Activated B cell treated with CpG ODN at 0.5 μM for 24 hours (primary cell): ENCODE measurements at regions of chr1 and their contacts with region 1.

Region 1: GRCh38 chr1:26284597-26285360 is 4.9 kb downstream of the SH3BGRL3 start:
- DNase-seq: peak; percentile 75
- ATAC-seq: peak; percentile 54
- H3K4me3 Mint-ChIP-seq: peak overlapping the region; percentile 83
- H3K27ac Mint-ChIP-seq: peak overlapping the region; percentile 100
- H3K4me1 Mint-ChIP-seq: peaks cover 93% of the 10 kb centered on the region
- H3K27me3 Mint-ChIP-seq: no peaks in the 10 kb centered on the region
- CTCF ChIP-seq: no peak

Region 2: GRCh38 chr1:24594154-24594553 is 1690.6 kb before region 1 on chr1:
- CTCF ChIA-PET with region 1: no interaction called
- POLR2A ChIA-PET with region 1: no interaction called
- intact Hi-C with region 1: no loop called
- DNase-seq: no peak
- ATAC-seq: no peak
- H3K4me3 Mint-ChIP-seq: no peak overlapping the region
- H3K27ac Mint-ChIP-seq: no peak overlapping the region
- H3K4me1 Mint-ChIP-seq: no peaks in the 10 kb centered on the region
- H3K27me3 Mint-ChIP-seq: peaks cover 13% of the 10 kb centered on the region
- CTCF ChIP-seq: no peak

Region 3: GRCh38 chr1:24714859-24715520 is 1569.8 kb before region 1 on chr1:
- CTCF ChIA-PET with region 1: no interaction called
- POLR2A ChIA-PET with region 1: interaction called, 10 read pairs
- intact Hi-C with region 1: no loop called
- DNase-seq: no peak
- ATAC-seq: no peak
- H3K4me3 Mint-ChIP-seq: no peak overlapping the region
- H3K27ac Mint-ChIP-seq: no peak overlapping the region
- H3K4me1 Mint-ChIP-seq: no peaks in the 10 kb centered on the region
- H3K27me3 Mint-ChIP-seq: no peaks in the 10 kb centered on the region
- CTCF ChIP-seq: no peak

Region 4: GRCh38 chr1:25952841-25953401 is 331.9 kb before region 1 on chr1:
- CTCF ChIA-PET with region 1: no interaction called
- POLR2A ChIA-PET with region 1: no interaction called
- intact Hi-C with region 1: no loop called
- DNase-seq: no peak
- ATAC-seq: no peak
- H3K4me3 Mint-ChIP-seq: no peak overlapping the region
- H3K27ac Mint-ChIP-seq: no peak overlapping the region
- H3K4me1 Mint-ChIP-seq: no peaks in the 10 kb centered on the region
- H3K27me3 Mint-ChIP-seq: no peaks in the 10 kb centered on the region
- CTCF ChIP-seq: no peak

Region 5: GRCh38 chr1:26233903-26234643 is 50.7 kb before region 1 on chr1 and contains the start of gene CEP85:
- CTCF ChIA-PET with region 1: interaction called, 5 read pairs
- POLR2A ChIA-PET with region 1: interaction called, 22 read pairs
- intact Hi-C with region 1: loop called (anchors 2 kb)
- DNase-seq: peak; percentile 94
- ATAC-seq: peak; percentile 88
- H3K4me3 Mint-ChIP-seq: peak within 1 kb of the TSS; percentile 98
- H3K27ac Mint-ChIP-seq: peak within 1 kb of the TSS; percentile 94
- H3K4me1 Mint-ChIP-seq: peaks cover 34% of the 10 kb centered on the region
- H3K27me3 Mint-ChIP-seq: no peaks in the 10 kb centered on the region
- CTCF ChIP-seq: no peak
- total RNA-seq, gene CEP85: 13.8 and 16.4 TPM in 2 replicates

Region 6: GRCh38 chr1:26306290-26307229 is 21.8 kb after region 1 on chr1 and contains the start of gene UBXN11:
- CTCF ChIA-PET with region 1: interaction called, 9 read pairs
- POLR2A ChIA-PET with region 1: interaction called, 76 read pairs
- intact Hi-C with region 1: loop called (anchors 1 kb)
- DNase-seq: peak; percentile 81
- ATAC-seq: peak; percentile 99
- H3K4me3 Mint-ChIP-seq: peak within 1 kb of the TSS; percentile 99
- H3K27ac Mint-ChIP-seq: peak within 1 kb of the TSS; percentile 94
- H3K4me1 Mint-ChIP-seq: peaks cover 27% of the 10 kb centered on the region
- H3K27me3 Mint-ChIP-seq: no peaks in the 10 kb centered on the region
- CTCF ChIP-seq: no peak
- total RNA-seq, gene UBXN11: 35.5 and 36.9 TPM in 2 replicates

Region 7: DNA sequence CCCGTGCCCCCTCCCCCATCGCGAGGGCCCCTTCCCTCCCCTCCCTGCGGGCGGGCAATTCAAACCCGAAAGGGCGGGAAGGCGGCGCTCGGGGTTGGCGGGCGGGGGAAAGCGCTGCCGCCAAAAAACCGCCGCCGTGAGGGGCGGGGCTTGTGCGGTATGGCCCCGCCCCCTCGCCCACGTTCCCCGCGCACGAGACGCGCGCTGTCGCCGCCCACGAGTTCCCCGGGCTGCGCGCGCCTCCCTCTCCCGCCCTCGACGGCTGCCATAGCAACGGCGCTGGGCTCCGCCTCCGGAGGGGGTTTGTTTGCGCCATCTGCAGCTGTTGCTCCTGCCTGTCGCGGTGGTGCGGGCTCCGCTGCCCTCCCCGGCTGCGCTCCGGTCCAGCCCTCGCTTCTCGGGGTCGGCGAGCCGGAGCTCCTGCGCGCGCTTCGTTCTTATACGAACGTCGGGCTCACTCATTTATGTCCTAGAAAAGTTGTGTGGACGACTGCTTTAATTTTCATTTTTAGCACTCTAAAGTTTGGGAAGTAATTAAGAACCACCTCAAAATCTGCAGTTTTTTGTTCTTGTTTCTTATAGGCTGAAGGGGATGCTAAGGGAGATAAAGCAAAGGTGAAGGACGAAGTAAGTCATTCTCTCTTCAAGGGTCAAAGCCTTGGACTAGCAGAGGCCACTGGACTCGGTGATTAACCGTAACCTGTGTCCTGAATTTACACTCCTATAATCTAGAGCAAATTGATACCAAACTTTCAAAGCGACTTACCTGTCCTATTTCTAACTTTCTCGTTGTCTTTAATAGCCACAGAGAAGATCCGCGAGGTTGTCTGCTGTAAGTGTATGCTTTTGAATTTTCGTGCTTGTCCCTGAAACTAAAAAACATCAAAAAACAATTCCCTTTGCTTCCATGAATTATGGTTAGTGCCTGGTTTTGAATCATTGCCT is 188.4 kb after region 1 on chr1:
- CTCF ChIA-PET with region 1: no interaction called
- POLR2A ChIA-PET with region 1: interaction called, 3 read pairs
- intact Hi-C with region 1: loop called (anchors 5 kb)
- DNase-seq: peak; percentile 95
- ATAC-seq: peak; percentile 78
- H3K4me3 Mint-ChIP-seq: peak overlapping the region; percentile 88
- H3K27ac Mint-ChIP-seq: peak overlapping the region; percentile 84
- H3K4me1 Mint-ChIP-seq: peaks cover 58% of the 10 kb centered on the region
- H3K27me3 Mint-ChIP-seq: no peaks in the 10 kb centered on the region
- CTCF ChIP-seq: no peak